Activated naive CD8-positive, alpha-beta T cell treated with anti-CD3 and anti-CD28 coated beads, Interleukin-2, amount 10 ng/mL, durations not matched to agents 7 days and 5 days (primary cell): ENCODE measurements at regions of chr3 and their contacts with region 1.

Region 1: DNA sequence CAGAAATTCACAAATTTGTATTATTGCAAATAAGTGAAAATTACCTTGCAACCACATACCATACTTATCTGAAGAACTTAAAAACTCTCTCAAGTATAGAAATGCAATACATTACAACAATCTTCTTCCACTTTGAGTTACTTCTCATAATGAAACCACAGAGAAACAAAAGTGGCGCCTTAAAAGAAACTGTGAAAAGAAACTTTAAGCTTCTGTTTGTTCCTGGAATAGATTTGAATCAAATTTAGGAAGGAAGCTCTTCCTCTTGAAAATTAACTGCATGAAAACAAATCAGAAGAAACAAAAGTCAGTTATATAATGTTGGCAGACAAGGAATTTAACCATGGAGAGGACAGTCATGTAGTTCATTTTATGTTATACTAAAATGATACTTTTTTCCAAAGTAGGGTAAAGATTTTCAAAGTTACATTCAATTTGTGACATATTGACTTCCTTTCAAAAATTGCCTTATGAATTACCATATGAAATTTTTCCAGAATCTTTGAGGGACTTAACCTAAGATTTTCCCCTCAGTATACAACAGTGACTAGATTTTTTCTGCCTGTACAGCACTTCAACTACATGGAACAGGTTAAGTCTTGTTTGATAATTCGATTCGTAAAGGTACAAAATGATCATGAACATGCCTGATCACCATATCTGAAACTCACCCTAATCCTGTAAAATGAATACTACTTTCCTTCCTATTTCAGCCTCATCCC is 57.6 kb upstream of the TNFSF10 start:
- DNase-seq: no peak
- ATAC-seq: peak; percentile 10
- H3K4me3 Mint-ChIP-seq: peak overlapping the region; percentile 76
- H3K27ac Mint-ChIP-seq: peak overlapping the region; percentile 90
- H3K4me1 Mint-ChIP-seq: peaks cover 90% of the 10 kb centered on the region
- H3K27me3 Mint-ChIP-seq: no peaks in the 10 kb centered on the region

Region 2: GRCh38 chr3:172511783-172512762 is 68.8 kb before region 1 on chr3:
- POLR2A ChIA-PET with region 1: interaction called, 17 read pairs
- DNase-seq: peak; percentile 66
- ATAC-seq: peak; percentile 60
- H3K4me3 Mint-ChIP-seq: peak overlapping the region; percentile 80
- H3K27ac Mint-ChIP-seq: peak overlapping the region; percentile 87
- H3K4me1 Mint-ChIP-seq: peaks cover 81% of the 10 kb centered on the region
- H3K27me3 Mint-ChIP-seq: no peaks in the 10 kb centered on the region